Activated T-helper 1 cell treated with anti-CD3 and anti-CD28 coated beads, Interleukin-12 subunit alpha, Interleukin-12 subunit beta, Interleukin-2, Interleukin-4 antibody, amounts not matched to agents 30 ng/mL and 10 ng/mL and 1 ng/mL, durations not matched to agents 14 hours and 24 hours and 36 hours (primary cell): ENCODE measurements at regions of chr17 and their contacts with region 1.

Region 1: DNA sequence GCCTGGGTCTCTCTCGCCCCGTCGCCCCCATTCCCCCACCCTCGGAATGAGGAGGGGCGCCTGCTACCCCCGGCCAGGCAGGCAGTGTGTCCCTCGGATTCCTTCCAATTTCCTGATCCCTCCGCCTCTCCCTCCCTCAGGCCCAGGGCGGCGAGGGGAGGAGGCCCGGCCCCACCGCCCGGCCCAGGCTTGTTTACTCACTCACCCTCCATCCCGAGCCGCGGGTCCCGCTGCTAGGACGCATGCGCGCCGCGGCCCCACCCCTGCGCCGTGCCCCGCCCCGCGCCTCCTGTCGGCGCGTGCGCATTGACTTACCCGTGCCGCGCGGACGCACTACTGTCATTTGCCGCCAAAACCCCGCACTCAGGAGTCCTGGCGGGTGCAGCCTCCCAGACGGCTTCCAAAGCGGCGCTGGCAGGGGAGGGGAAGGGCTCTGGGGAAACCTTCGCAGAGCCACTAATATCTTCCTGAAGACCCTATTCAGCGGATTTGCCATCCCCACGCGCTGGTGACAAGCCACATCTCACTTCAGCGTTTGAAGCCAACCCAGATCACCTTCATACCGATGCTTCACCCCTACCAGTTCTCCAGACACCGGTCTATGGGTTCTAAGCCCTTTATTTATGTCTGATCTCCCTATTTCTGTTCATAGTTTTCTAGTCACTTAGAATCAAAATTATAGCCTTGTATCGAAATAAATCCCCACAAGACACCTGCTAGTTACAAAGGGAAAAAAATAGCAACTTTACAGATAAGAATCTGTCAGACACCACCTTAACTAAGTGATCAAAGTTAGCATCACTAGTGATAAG is at the start of gene EZH1:
- DNase-seq: peak; percentile 93
- H3K4me3 Mint-ChIP-seq: peak within 1 kb of the TSS; percentile 91
- H3K27ac Mint-ChIP-seq: peak within 1 kb of the TSS; percentile 83
- H3K4me1 Mint-ChIP-seq: peaks cover 15% of the 10 kb centered on the region
- H3K27me3 Mint-ChIP-seq: peaks cover 25% of the 10 kb centered on the region
- total RNA-seq, gene EZH1: 35.6 and 40.0 TPM in 2 replicates

Region 2: GRCh38 chr17:42760652-42761581 is 15.9 kb after region 1 on chr17 and contains the start of gene RAMP2:
- intact Hi-C with region 1: loop called (anchors 1 kb)
- DNase-seq: no peak
- H3K4me3 Mint-ChIP-seq: peak within 1 kb of the TSS; percentile 54
- H3K27ac Mint-ChIP-seq: no peak within 1 kb of the TSS
- H3K4me1 Mint-ChIP-seq: peaks cover 6% of the 10 kb centered on the region
- H3K27me3 Mint-ChIP-seq: peaks cover 55% of the 10 kb centered on the region
- total RNA-seq, gene RAMP2: not detected in 2 replicates

Region 3: DNA sequence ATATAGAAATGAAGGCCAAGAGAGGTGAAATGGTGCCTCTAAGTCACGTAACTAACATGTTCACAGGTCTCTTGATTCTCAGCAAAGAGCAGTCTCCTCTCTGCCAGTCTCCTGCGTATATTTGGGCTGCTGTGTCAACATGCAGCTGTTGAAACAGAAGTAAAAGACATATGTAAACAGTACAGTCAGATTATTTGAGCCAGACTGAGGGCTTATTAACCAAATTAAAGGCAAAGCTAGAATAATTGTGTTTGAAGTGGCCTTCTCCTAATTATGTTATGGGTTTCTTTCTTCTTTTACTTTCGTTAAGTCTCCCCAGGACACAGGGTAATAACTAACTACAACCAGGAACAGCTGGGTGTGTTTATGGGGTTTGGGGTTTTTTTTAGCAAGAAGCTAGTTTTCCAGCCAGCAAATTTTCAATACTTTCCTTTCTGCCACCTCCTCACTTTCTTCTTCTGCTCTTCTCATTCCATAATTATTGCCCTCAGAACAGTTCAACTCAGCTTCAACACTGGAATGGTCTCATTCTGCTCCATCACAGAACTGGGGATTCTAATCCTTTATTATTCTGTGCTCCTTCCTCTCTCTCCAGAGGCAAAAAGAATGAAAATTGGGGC is 174.0 kb after region 1 on chr17:
- intact Hi-C with region 1: no loop called
- DNase-seq: no peak
- H3K4me3 Mint-ChIP-seq: no peak overlapping the region
- H3K27ac Mint-ChIP-seq: no peak overlapping the region
- H3K4me1 Mint-ChIP-seq: peaks cover 9% of the 10 kb centered on the region
- H3K27me3 Mint-ChIP-seq: peaks cover 16% of the 10 kb centered on the region

Region 4: GRCh38 chr17:42937712-42938596 is 192.9 kb after region 1 on chr17:
- intact Hi-C with region 1: no loop called
- DNase-seq: no peak
- H3K4me3 Mint-ChIP-seq: no peak overlapping the region
- H3K27ac Mint-ChIP-seq: no peak overlapping the region
- H3K4me1 Mint-ChIP-seq: peaks cover 3% of the 10 kb centered on the region
- H3K27me3 Mint-ChIP-seq: peaks cover 16% of the 10 kb centered on the region